Ascending aorta (tissue), 2 donors: ENCODE measurements at regions of chr12 and their contacts with region 1.

Region 1: GRCh38 chr12:82358200-82359114 is at the starts of genes CCDC59 and METTL25:
- DNase-seq: peak; percentile 90 to 98
- H3K4me3 ChIP-seq: peak within 1 kb of the TSS; percentile 70 to 89
- H3K27ac ChIP-seq: peak within 1 kb of the TSS; percentile 95
- H3K4me1 ChIP-seq: peaks cover 0 to 23% of the 10 kb centered on the region in 2 donors
- H3K27me3 ChIP-seq: no peaks in the 10 kb centered on the region
- CTCF ChIP-seq: peak; percentile 89 to 98 (median 98)
- total RNA-seq, gene CCDC59: 14.4 TPM
- total RNA-seq, gene METTL25: 2.2 TPM

Region 2: DNA sequence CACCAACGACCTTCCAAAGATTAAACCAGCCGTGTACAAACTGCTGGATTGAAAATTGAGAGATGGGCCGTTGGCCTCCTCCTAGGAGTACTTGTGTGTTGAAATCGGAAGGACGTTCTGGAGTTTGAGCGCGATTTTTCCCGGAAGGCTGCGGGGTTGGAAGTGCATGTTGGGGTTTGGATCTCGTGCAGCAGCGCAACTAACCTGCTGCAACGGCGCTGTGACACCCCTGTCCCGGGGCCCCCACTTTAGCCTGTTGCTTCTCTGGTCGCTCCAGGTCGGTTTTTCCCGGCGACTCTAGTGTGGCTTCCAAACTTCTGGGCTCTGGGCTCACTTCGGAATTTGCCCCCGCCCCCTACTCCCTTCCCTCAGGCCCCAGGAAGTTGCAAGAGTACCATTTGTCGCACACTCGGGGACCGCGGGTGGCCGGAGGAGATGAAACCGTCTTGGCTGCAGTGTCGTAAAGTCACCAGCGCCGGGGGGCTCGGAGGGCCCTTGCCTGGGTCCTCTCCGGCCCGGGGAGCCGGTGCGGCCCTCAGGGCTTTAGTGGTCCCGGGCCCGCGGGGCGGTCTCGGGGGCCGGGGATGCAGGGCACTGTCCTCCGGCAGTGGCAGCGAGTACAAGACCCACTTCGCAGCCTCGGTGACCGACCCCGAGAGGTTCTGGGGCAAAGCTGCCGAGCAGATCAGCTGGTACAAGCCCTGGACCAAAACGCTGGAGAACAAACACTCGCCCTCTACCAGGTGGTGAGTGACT is 1280.6 kb before region 1 on chr12 and contains the start of gene ACSS3:
- intact Hi-C with region 1: loop called (anchors 5 kb)
- DNase-seq: peak in 1 of 2 donors; percentile 78
- H3K4me3 ChIP-seq: peak within 1 kb of the TSS; percentile 72 to 96
- H3K27ac ChIP-seq: peak within 1 kb of the TSS; percentile 91 to 93
- H3K4me1 ChIP-seq: peaks cover 0 to 6% of the 10 kb centered on the region in 2 donors
- H3K27me3 ChIP-seq: no peaks in the 10 kb centered on the region
- CTCF ChIP-seq: no peak
- total RNA-seq, gene ACSS3: 11.6 TPM

Region 3: GRCh38 chr12:81644503-81644902 is 714.0 kb before region 1 on chr12:
- intact Hi-C with region 1: loop called (anchors 10 kb)
- DNase-seq: no peak
- H3K4me3 ChIP-seq: no peak overlapping the region
- H3K27ac ChIP-seq: no peak overlapping the region
- H3K4me1 ChIP-seq: no peaks in the 10 kb centered on the region
- H3K27me3 ChIP-seq: no peaks in the 10 kb centered on the region
- CTCF ChIP-seq: peak; percentile 39 to 65 (median 54)

Region 4: DNA sequence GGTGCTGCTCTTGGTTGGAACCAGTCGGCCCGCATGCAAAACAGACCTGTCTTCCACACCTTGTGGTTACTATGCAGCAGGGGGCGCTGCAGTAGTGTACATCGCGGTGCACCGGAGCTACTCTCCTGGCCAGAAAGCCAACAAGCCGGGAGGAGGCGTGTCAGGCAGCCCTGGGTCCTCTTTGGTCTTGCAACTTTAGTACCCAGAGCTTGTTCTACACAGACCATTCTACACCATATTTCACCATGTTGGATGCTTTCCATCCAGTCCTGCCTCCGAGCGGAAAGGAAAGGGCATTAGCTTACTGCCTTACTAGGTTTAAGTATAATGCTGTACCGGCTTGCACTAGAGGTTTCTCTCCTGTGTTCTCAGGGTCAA is 327.3 kb after region 1 on chr12:
- intact Hi-C with region 1: loop called (anchors 2 kb)
- DNase-seq: peak; percentile 77 to 97
- H3K4me3 ChIP-seq: peak overlapping the region; percentile 75 to 87
- H3K27ac ChIP-seq: peak overlapping the region; percentile 80 to 92
- H3K4me1 ChIP-seq: no peaks in the 10 kb centered on the region
- H3K27me3 ChIP-seq: no peaks in the 10 kb centered on the region
- CTCF ChIP-seq: peak; percentile 69 to 94 (median 80)